ENCODE measurements at regions of chr13 and their contacts with region 1.

Region 1: DNA sequence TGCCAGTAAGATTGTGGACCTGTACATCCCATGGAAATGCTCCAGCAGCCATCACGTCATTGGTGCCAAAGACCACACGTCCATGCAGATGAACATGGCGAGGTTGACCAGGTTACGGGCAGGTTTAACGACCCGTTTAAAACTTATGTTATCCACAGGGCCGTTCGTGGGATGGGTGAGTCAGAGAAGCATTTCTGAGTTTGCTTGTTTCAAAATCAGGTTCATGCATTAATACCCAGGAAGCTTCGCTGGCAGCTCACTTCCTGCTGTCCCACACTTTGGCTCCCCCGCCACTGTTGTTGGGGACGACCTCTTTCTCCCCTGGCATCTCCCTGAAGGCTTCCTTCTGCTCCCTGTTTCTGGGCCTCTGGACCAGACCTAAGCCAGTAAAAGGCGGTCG is 194.1 kb downstream of the USP12 start:
- DNase-seq: no peak
- ATAC-seq: no peak

Region 2: GRCh38 chr13:27353166-27353583 is 375.6 kb after region 1 on chr13:
- intact Hi-C with region 1: loop called (anchors 2 kb)
- DNase-seq: no peak
- ATAC-seq: no peak

Measured in sciatic nerve (tissue), 2 donors.